Activated CD4-positive, alpha-beta T cell treated with anti-CD3 and anti-CD28 coated beads, Interleukin-2, amount 10 ng/mL, durations not matched to agents 24 days and 14 days (primary cell): ENCODE measurements at regions of chr11 and their contacts with region 1.

Region 1: DNA sequence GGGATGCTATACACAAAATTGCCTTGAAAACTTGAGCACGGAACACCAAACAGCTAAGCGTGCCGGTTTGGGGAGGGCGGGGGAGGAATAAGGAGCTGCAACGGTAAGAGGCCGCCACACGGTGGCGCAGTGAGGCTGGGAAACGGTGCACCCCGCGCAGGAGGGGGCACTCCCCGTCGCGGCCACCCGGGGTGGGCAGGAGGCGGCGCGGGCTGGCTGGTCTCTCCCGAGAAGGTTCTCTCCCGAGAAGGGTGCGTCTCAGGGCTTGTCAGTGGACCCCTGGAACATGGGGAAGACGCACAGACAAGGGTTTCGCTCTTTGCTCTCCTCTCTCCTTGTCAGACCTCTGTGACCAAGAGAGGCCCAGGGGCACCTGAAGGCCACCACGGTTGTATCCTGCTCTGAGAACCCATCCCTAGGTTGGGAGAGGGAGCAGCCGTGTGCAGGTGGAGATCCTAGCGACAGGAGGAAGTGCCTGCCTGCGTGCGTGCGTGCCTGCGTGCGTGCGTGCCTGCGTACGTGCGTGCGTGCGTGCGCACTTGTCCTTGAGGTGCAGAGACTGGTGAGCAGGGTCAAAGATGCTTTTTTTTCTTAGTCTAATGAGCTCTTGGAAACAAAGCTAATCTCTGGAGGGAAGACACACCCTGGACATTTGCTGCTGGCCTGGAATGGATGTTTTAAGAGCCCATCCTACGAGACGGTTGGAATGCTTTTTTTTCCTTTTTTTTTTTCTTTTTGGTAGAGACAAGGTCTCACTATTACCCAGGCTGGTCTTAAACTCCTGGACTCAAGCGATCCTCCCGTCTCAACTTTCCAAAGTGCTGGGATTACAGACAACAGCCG is 18.1 kb upstream of the JAM3 start:
- DNase-seq: peak; percentile 93
- H3K4me3 Mint-ChIP-seq: peak overlapping the region; percentile 50
- H3K27ac Mint-ChIP-seq: no peak overlapping the region
- H3K4me1 Mint-ChIP-seq: peaks cover 12% of the 10 kb centered on the region
- H3K27me3 Mint-ChIP-seq: peaks cover 11% of the 10 kb centered on the region

Region 2: DNA sequence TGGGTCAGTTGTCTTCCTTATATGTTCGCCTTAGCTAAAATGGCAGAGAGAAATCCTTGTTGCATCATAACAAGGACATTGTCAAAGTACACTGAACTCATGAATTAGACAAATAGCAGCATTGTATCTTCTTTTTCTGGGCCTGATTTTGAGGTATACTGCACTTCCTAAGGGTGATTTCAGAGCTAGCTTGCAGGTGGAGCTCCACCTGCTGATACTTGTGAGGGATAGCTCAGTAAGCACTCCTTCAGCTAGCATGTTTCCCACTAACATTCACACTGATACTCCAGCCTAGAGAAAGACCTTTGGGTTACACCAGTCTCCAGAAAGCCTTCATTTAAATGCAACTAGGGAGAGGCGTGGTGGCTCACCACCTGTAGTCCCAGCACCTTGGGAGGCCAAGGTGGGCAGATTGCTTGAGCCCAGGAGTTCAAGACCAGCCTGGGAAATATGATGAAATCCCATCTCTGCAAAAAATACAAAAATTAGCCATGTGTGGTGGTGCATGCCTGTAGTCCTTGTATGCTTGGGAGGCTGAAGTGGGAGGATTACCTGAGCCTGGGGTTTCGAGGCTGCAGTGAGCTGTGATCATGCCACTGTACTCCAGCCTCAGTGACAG is 47.9 kb after region 1 on chr11:
- intact Hi-C with region 1: loop called (anchors 1 kb)
- DNase-seq: peak; percentile 58
- H3K4me3 Mint-ChIP-seq: no peak overlapping the region
- H3K27ac Mint-ChIP-seq: no peak overlapping the region
- H3K4me1 Mint-ChIP-seq: no peaks in the 10 kb centered on the region
- H3K27me3 Mint-ChIP-seq: peaks cover 6% of the 10 kb centered on the region

Region 3: DNA sequence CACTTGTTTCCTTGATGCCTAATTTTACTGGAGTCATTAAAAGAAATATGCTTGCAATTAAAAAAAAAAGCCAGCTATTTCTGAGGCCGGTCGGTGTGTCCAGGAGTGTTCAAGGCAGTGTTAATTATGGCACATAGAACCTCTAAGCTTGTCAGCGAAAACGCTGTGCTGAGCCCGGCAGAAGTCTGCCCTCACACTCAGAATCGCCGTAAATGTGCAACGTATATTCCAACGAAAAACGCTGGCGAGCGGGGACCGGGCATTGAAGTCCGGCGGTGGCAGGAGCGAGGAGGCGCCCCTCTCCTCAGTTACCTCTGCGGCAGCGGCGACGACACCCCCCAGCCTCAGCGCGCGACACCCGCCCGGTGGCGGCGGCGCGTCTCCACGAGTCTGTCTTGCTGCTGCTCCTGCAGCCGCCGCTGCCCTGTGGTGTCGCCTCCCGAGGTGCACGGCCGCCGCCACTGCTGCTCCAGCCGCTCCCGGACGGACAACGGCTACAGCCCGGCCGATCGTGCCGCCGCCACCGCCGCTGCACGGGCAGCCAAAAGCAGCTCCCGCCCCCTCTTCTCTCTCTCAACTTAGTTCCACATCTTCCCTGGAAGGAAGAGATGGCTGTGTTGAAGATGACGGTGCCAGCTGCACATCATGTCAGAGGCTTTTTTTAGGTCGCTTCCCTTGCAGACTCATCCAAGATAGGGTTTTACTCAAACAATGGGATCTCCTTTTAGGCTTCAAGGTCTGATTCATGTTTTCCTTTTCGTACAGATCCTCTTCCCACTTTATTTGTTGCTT is 74.1 kb after region 1 on chr11:
- intact Hi-C with region 1: no loop called
- DNase-seq: no peak
- H3K4me3 Mint-ChIP-seq: peak overlapping the region; percentile 48
- H3K27ac Mint-ChIP-seq: no peak overlapping the region
- H3K4me1 Mint-ChIP-seq: peaks cover 15% of the 10 kb centered on the region
- H3K27me3 Mint-ChIP-seq: peaks cover 47% of the 10 kb centered on the region

Region 4: GRCh38 chr11:134139873-134140331 is 89.1 kb after region 1 on chr11:
- intact Hi-C with region 1: loop called (anchors 1 kb)
- DNase-seq: peak; percentile 84
- H3K4me3 Mint-ChIP-seq: no peak overlapping the region
- H3K27ac Mint-ChIP-seq: no peak overlapping the region
- H3K4me1 Mint-ChIP-seq: peaks cover 16% of the 10 kb centered on the region
- H3K27me3 Mint-ChIP-seq: no peaks in the 10 kb centered on the region